Vagina (tissue), 2 donors: ENCODE measurements at regions of chr19 and their contacts with region 1.

Region 1: GRCh38 chr19:46840136-46840942 is 10.3 kb downstream of the AP2S1 start:
- DNase-seq: no peak
- H3K4me3 ChIP-seq: no peak overlapping the region
- H3K27ac ChIP-seq: peak overlapping the region; percentile 70
- H3K4me1 ChIP-seq: peaks cover 22% of the 10 kb centered on the region
- H3K27me3 ChIP-seq: no peaks in the 10 kb centered on the region
- CTCF ChIP-seq: peak; percentile 59 to 92 (median 62)
- POLR2A ChIP-seq: no peak

Region 2: GRCh38 chr19:46753420-46754155 is 86.8 kb before region 1 on chr19:
- intact Hi-C with region 1: loop called (anchors 2 kb)
- DNase-seq: no peak
- H3K4me3 ChIP-seq: no peak overlapping the region
- H3K27ac ChIP-seq: no peak overlapping the region
- H3K4me1 ChIP-seq: peaks cover 22% of the 10 kb centered on the region
- H3K27me3 ChIP-seq: no peaks in the 10 kb centered on the region
- CTCF ChIP-seq: peak in 1 of 3 experiments; percentile 14
- POLR2A ChIP-seq: no peak